CD4-positive, alpha-beta T cell (primary cell): ENCODE measurements at regions of chr7 and their contacts with region 1.

Region 1: DNA sequence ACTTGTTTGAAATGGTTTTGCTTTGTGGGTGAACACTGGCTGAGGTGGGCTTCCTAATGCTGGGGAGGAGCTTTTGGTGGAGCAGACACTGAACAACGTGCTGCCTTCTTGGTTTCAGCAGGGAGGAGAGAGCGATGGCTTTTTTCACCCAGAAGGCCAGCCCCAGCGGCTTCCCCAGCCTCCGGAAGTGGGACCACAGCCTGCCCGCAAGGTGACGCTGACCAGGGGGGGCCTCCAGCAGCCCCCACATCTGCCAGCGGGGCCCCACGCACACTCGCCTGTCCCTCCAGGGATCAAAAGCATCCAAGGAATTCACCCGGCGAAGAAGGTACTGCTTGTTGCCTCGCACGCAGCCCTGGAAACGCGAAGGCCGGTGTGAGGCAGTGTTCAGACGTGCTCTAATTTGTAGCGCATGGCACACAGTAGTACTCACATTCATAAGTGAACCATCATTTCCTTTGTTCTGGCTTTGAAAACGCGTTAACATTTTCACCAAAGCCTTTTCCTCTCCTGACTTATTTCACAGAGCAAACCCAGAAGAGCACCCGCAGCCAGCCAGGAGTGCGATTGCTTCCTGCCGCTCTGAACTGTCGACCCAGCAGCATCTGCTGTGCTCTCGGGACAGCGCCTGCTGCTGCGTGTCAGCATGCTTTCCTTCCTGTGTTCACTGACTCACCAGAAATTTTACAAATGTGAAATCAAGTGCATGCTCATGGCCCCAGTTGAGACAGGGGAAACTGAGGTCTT is 48.4 kb downstream of the SHH start:
- DNase-seq: peak; percentile 24 to 79 (median 48)
- ATAC-seq: peak; percentile 85
- H3K4me3 ChIP-seq: peak overlapping the region; percentile 18
- H3K4me3 Mint-ChIP-seq: peak overlapping the region; percentile 84
- H3K27ac ChIP-seq: peak overlapping the region; percentile 57 to 67
- H3K27ac Mint-ChIP-seq: peak overlapping the region; percentile 84
- H3K4me1 ChIP-seq: peaks cover 36% of the 10 kb centered on the region
- H3K4me1 Mint-ChIP-seq: peaks cover 57% of the 10 kb centered on the region
- H3K27me3 ChIP-seq: no peaks in the 10 kb centered on the region
- H3K27me3 Mint-ChIP-seq: no peaks in the 10 kb centered on the region
- CTCF ChIP-seq: no peak

Region 2: DNA sequence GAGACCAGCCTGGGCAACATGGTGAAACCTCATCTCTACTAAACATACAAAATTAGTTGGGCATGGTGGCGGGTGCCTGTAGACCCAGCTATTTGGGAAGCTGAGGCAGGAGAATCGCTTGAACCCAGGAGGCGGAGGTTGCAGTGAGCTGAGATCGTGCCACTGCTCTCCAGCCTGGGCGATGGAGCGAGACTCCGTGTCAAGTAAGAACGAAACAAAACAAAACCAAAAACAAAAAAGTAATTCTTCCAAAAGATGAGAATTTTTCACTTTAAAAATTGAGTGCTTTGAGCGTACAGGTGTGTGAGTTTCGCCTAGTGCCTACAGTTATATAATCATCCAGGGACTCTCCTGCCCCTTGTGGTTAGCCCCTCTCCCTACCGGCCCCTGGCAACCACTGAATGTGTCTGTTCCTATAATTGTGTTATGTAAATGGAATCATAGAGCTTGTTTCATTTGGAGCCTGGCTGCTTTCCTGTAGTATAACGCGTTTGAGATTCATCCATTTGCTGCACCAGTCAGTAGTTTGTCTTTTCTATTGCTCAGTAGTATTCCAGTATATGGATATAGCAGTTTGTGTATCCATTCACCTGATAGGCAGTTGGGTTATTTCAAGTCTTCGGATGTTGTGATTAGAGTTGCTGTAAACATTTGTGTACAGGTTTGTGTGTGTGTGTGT is 39.4 kb before region 1 on chr7:
- CTCF ChIA-PET with region 1: no interaction called
- POLR2A ChIA-PET with region 1: interaction called, 3 read pairs
- intact Hi-C with region 1: loop called in 1 of 2 experiments (anchors 5 kb)
- DNase-seq: peak in 1 of 14 experiments; percentile 13
- ATAC-seq: peak; percentile 49
- H3K4me3 ChIP-seq: no peak overlapping the region
- H3K4me3 Mint-ChIP-seq: no peak overlapping the region
- H3K27ac ChIP-seq: no peak overlapping the region
- H3K27ac Mint-ChIP-seq: peak overlapping the region; percentile 65
- H3K4me1 ChIP-seq: peaks cover 2% of the 10 kb centered on the region
- H3K4me1 Mint-ChIP-seq: peaks cover 55% of the 10 kb centered on the region
- H3K27me3 ChIP-seq: no peaks in the 10 kb centered on the region
- H3K27me3 Mint-ChIP-seq: no peaks in the 10 kb centered on the region
- CTCF ChIP-seq: no peak

Region 3: GRCh38 chr7:155796381-155797261 is 32.8 kb after region 1 on chr7:
- CTCF ChIA-PET with region 1: no interaction called
- POLR2A ChIA-PET with region 1: no interaction called
- intact Hi-C with region 1: no loop called
- DNase-seq: peak; percentile 32 to 78 (median 60)
- ATAC-seq: peak; percentile 58
- H3K4me3 ChIP-seq: no peak overlapping the region
- H3K4me3 Mint-ChIP-seq: no peak overlapping the region
- H3K27ac ChIP-seq: no peak overlapping the region
- H3K27ac Mint-ChIP-seq: no peak overlapping the region
- H3K4me1 ChIP-seq: peaks cover 7% of the 10 kb centered on the region
- H3K4me1 Mint-ChIP-seq: no peaks in the 10 kb centered on the region
- H3K27me3 ChIP-seq: peaks cover 29 to 45% of the 10 kb centered on the region in 2 experiments
- H3K27me3 Mint-ChIP-seq: peaks cover 44% of the 10 kb centered on the region
- CTCF ChIP-seq: peak; percentile 86